B cell (primary cell): ENCODE measurements at regions of chr2 and their contacts with region 1.

Region 1: GRCh38 chr2:233498126-233498525 is 68.5 kb downstream of the USP40 start:
- DNase-seq: peak; percentile 51
- ATAC-seq: peak; percentile 62
- H3K4me3 ChIP-seq: no peak overlapping the region
- H3K4me3 Mint-ChIP-seq: no peak overlapping the region
- H3K27ac ChIP-seq: no peak overlapping the region
- H3K27ac Mint-ChIP-seq: peak overlapping the region; percentile 33
- H3K4me1 ChIP-seq: peaks cover 7 to 11% of the 10 kb centered on the region in 2 donors
- H3K4me1 Mint-ChIP-seq: peaks cover 18% of the 10 kb centered on the region
- H3K27me3 ChIP-seq: no peaks in the 10 kb centered on the region
- H3K27me3 Mint-ChIP-seq: no peaks in the 10 kb centered on the region
- CTCF ChIP-seq: peak; percentile 32

Region 2: DNA sequence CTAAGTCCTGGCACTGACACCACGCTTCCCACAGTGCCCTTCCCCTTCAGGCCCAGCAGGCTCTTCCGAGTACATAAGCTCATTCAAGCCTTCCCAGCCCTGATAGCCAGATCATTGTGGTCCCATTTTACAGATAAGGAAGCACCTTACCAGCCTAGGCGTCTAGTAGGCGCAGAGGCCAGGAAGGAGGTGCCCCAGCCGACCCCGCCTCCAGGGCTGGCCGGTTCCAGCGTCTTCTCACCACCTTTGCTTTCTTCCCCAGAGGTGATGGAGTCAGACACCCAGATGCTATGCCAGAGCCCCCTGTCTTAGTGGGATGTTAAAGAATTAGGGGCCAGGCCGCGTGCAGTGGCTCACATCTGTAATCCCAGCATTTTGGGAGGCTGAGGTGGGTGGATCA is 893.6 kb before region 1 on chr2:
- CTCF ChIA-PET with region 1: no interaction called
- POLR2A ChIA-PET with region 1: no interaction called
- intact Hi-C with region 1: no loop called
- DNase-seq: no peak
- ATAC-seq: no peak
- H3K4me3 ChIP-seq: no peak overlapping the region
- H3K4me3 Mint-ChIP-seq: no peak overlapping the region
- H3K27ac ChIP-seq: no peak overlapping the region
- H3K27ac Mint-ChIP-seq: no peak overlapping the region
- H3K4me1 ChIP-seq: peaks cover 3 to 8% of the 10 kb centered on the region in 2 donors
- H3K4me1 Mint-ChIP-seq: peaks cover 9% of the 10 kb centered on the region
- H3K27me3 ChIP-seq: no peaks in the 10 kb centered on the region
- H3K27me3 Mint-ChIP-seq: peaks cover 16% of the 10 kb centered on the region
- CTCF ChIP-seq: no peak

Region 3: DNA sequence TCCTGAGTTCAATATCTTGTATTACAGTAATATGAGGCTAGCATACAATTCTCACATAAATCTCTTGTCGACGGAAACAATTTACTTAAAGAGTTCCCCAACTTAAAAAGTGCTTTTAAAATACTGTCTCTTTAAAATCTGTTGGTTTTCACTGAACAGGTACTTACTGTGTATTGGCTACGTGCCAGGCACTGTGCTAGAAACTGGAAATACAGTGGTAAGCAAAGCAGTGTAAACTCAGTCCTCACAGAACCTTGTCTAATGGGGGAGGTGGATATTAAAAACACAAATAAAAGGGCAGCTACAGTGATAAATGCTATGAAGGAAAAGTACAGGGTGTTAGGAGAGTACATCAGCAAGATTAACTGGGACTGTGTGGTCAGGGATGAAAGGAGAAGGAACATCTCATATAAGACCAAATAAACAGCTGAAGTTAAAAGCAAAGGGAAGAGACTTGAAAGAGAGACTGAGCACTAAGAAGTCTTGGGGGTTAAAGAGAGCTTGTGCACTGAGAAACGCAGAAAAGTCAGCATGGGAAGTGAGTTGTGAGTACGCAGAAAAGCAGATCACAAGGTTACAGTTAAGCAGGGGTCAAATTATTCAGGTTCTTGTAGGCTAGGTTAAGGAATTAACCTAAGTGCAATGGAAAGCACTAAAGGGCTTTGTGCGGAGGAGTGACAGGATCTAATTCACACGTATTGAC is 16.0 kb after region 1 on chr2:
- CTCF ChIA-PET with region 1: interaction called, 11 read pairs
- POLR2A ChIA-PET with region 1: interaction called, 3 read pairs
- intact Hi-C with region 1: no loop called
- DNase-seq: peak; percentile 59
- ATAC-seq: peak; percentile 51
- H3K4me3 ChIP-seq: no peak overlapping the region
- H3K4me3 Mint-ChIP-seq: peak overlapping the region; percentile 37
- H3K27ac ChIP-seq: peak overlapping the region; percentile 64 to 70
- H3K27ac Mint-ChIP-seq: peak overlapping the region; percentile 86
- H3K4me1 ChIP-seq: peaks cover 36 to 52% of the 10 kb centered on the region in 2 donors
- H3K4me1 Mint-ChIP-seq: peaks cover 57% of the 10 kb centered on the region
- H3K27me3 ChIP-seq: no peaks in the 10 kb centered on the region
- H3K27me3 Mint-ChIP-seq: no peaks in the 10 kb centered on the region
- CTCF ChIP-seq: no peak